Endothelial cell of umbilical vein (primary cell): ENCODE measurements at regions of chr21 and their contacts with region 1.

Region 1: DNA sequence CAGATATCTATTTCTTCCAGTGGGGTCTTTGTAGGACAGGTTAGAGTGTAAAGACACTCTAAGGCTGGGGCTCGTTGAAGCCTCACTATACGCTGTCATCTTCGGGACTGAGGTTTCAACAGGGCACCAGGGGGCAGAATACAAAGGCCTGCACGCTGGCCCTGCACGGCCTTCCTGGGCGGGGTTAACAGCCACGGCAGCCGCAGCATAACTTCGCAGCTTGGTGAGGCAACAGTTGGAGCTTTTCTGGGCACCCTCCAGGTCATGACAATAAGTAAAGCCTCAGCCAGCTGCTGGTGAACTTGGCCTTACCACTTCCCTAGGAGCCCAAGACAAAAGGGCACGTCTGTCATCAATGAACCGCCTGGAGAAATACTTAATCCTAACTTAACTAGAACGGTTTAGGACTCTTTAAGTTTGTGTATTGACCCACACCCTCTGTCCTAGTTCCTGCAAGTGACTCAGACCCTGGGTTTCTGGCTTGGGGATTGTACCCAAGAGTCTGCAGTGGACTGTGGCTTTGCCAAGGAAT is 2.3 kb upstream of the RUNX1 start:
- DNase-seq: peak; percentile 72
- H3K4me3 ChIP-seq: no peak overlapping the region
- H3K27ac ChIP-seq: no peak overlapping the region
- H3K4me1 ChIP-seq: peaks cover 43% of the 10 kb centered on the region
- H3K27me3 ChIP-seq: no peaks in the 10 kb centered on the region
- CTCF ChIP-seq: peak; percentile 71 to 74
- POLR2A ChIP-seq: no peak

Region 2: DNA sequence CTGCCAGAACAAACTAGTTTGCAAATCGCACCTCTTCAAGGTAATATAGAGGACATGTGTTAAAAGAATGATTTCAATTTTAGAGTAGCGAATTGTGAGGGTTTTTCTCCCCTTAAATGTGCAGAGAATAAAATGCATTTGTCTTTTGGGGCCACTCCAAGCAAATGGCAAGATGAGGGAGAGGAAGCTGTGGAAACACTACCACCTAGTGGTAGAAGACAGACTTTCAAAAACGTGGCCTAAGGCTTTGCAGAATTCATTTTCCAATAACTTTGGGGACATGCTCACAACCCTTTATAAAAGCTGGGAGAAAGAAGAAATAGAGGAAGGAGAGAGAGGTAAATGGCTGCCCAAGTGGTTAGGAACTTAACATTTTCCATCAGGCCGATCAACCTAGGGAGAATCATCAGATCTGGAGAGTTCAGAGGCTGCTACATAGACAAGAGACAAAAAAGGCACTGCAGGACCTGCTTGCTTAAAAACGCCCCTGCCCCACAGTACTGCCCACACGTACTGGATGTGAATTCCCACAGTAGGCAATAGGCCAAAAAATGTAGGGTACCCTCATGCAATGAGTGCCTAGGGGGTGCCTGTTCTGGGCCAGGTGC is 420.7 kb before region 1 on chr21:
- CTCF ChIA-PET with region 1: no interaction called
- POLR2A ChIA-PET with region 1: no interaction called
- dilution Hi-C with region 1: no loop called
- intact Hi-C with region 1: no loop called
- DNase-seq: peak; percentile 62
- H3K4me3 ChIP-seq: no peak overlapping the region
- H3K27ac ChIP-seq: no peak overlapping the region
- H3K4me1 ChIP-seq: no peaks in the 10 kb centered on the region
- H3K27me3 ChIP-seq: peaks cover 5 to 14% of the 10 kb centered on the region in 2 experiments
- CTCF ChIP-seq: peak; percentile 54 to 68
- POLR2A ChIP-seq: no peak

Region 3: GRCh38 chr21:34983680-34984086 is 67.7 kb before region 1 on chr21:
- CTCF ChIA-PET with region 1: interaction called, 6 read pairs
- POLR2A ChIA-PET with region 1: interaction called, 3 read pairs
- dilution Hi-C with region 1: no loop called
- intact Hi-C with region 1: loop called (anchors 2 kb)
- DNase-seq: peak; percentile 40
- H3K4me3 ChIP-seq: no peak overlapping the region
- H3K27ac ChIP-seq: peak overlapping the region; percentile 90
- H3K4me1 ChIP-seq: peaks cover 19% of the 10 kb centered on the region
- H3K27me3 ChIP-seq: peaks cover 2 to 10% of the 10 kb centered on the region in 2 experiments
- CTCF ChIP-seq: no peak
- POLR2A ChIP-seq: no peak

Region 4: DNA sequence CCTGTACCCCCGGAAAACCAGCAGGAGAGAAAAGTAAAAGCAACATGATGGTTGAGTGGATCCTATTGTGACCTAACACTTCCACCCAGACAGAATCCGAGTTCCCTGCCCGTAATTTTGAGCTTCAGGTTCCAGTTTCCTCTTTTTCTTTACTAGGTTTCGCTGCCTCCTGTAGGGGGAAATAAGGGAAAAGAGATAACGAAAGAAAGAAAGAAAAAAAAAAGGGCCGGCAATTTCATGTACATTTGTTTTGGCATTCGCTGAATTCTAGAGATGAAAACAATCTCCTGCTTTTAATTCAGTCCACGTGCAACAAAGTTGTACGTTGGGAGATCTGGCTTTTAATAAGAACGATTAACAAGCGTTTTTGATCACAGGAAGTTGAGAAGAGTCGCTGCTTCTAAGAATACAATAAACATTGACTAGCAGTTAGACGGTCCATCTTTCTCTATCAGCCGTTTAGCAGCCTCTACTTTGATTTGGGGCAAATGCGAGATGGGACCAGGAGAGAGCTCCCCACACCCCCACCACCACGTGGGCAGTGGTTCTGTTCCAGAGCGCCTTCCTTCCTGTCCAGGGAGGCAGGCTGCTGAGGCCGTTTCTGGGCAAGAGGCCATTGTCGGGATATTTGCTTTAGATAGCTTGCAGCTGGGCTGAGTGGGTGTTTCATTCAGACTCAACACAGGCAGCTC is 153.6 kb after region 1 on chr21:
- CTCF ChIA-PET with region 1: interaction called, 22 read pairs
- POLR2A ChIA-PET with region 1: no interaction called
- dilution Hi-C with region 1: no loop called
- intact Hi-C with region 1: loop called (anchors 1 kb)
- DNase-seq: peak; percentile 96
- H3K4me3 ChIP-seq: peak overlapping the region in 1 of 3 experiments; percentile 24
- H3K27ac ChIP-seq: peak overlapping the region; percentile 53
- H3K4me1 ChIP-seq: peaks cover 35% of the 10 kb centered on the region
- H3K27me3 ChIP-seq: no peaks in the 10 kb centered on the region
- CTCF ChIP-seq: no peak
- POLR2A ChIP-seq: peak; percentile 42

Region 5: DNA sequence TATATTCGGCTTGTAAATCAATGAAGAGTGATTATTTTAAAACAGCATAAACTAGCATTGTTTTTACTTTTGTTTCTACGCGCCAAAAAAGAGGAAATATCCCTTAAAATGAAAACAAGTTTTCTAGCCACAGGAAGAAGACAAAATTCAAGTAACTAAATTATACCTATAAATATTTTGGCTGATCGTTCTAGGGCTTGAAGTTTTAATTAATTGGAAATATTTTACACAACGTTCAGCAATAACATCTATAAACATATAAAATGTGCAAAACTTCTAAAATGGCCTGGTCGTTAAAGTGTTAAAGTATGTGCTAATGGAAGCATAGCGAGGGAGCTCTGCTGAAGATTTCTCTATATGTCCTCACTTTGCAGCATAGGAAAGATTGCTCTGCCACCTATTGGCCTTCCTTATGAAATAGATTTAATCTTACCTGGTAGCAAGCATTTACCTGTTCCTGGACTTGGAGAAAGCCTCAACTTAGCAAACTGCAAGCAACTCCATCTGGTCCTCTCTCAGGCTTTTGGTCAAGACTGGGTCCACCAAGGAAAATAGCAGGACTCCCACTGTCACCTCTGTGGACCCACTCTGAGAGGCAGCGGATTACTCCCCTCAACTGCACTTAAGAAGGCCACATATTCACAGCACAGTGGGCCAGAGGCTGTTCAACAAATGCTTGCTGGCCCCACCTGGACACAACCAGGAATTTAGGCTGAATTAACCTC is 349.0 kb after region 1 on chr21:
- CTCF ChIA-PET with region 1: interaction called, 47 read pairs
- POLR2A ChIA-PET with region 1: no interaction called
- dilution Hi-C with region 1: no loop called
- intact Hi-C with region 1: loop called (anchors 1 kb)
- DNase-seq: peak; percentile 73
- H3K4me3 ChIP-seq: no peak overlapping the region
- H3K27ac ChIP-seq: no peak overlapping the region
- H3K4me1 ChIP-seq: peaks cover 7% of the 10 kb centered on the region
- H3K27me3 ChIP-seq: peaks cover 0 to 2% of the 10 kb centered on the region in 2 experiments
- CTCF ChIP-seq: peak; percentile 24 to 29
- POLR2A ChIP-seq: no peak

Region 6: DNA sequence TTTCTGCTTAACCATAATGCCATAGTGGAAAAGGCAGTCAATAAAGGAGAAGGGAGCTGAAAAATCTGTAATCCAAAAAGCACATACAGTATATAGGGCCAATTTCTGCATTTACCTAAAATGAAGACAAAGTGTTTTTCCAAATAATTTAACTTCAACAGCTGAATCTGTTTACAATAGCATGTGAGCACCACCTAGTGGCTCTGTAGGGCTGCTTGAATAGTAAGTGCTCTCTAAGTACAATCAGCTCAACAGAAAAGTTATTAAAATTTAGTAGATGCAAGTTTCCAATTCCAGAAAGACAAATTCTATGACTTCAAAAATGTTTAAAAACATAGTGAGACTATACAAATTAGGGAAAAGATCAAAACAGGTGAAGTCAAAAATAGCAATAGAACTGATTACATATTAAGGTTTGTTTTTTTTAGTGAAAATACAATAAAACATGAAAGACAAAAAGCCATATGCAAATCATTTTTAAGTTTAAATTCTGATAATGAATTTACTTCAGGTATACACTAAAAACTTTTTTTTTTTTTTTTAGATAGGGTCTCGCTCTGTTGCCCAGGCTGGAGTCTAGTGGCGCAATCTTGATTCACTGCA is 788.9 kb after region 1 on chr21:
- CTCF ChIA-PET with region 1: interaction called, 21 read pairs
- POLR2A ChIA-PET with region 1: no interaction called
- dilution Hi-C with region 1: no loop called
- intact Hi-C with region 1: loop called (anchors 2 kb)
- DNase-seq: peak; percentile 78
- H3K4me3 ChIP-seq: no peak overlapping the region
- H3K27ac ChIP-seq: no peak overlapping the region
- H3K4me1 ChIP-seq: no peaks in the 10 kb centered on the region
- H3K27me3 ChIP-seq: peaks cover 0 to 2% of the 10 kb centered on the region in 2 experiments
- CTCF ChIP-seq: peak; percentile 65 to 71
- POLR2A ChIP-seq: no peak

Region 7: GRCh38 chr21:36028127-36029069 is 977.0 kb after region 1 on chr21:
- CTCF ChIA-PET with region 1: no interaction called
- POLR2A ChIA-PET with region 1: no interaction called
- dilution Hi-C with region 1: no loop called
- intact Hi-C with region 1: loop called (anchors 2 kb)
- DNase-seq: peak; percentile 73
- H3K4me3 ChIP-seq: no peak overlapping the region
- H3K27ac ChIP-seq: no peak overlapping the region
- H3K4me1 ChIP-seq: no peaks in the 10 kb centered on the region
- H3K27me3 ChIP-seq: peaks cover 0 to 2% of the 10 kb centered on the region in 2 experiments
- CTCF ChIP-seq: peak; percentile 90 to 92
- POLR2A ChIP-seq: no peak

Region 8: DNA sequence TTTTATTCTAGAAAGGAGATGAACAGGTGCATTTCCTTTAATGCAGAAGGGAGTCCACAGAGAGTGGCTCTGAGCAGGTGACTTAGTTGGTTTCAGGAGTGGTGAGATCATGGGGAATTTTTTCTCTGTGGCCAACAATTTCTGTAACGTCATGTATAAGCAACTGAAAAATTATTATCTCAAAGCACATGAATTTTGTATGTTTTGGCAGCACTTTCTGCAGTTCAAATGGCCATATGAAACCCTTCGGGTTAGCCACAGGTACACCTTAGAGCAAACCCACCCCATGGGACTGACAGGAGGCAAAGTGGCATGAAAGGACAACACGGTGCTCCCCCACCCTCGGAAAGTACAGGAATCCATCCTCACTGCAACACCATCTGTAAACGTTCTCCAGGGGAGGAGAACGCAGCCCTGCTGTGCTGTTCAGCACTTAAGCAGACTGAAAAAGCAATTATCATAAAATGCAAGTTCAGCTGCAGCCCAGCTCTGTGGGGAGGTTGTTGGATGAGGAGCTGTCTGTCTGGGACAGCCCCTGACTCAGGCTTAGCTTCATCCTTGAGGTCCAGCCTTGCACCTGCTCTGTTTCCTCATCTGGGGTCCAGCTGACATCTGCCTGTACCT is 1484.4 kb after region 1 on chr21:
- CTCF ChIA-PET with region 1: no interaction called
- POLR2A ChIA-PET with region 1: no interaction called
- dilution Hi-C with region 1: no loop called
- intact Hi-C with region 1: no loop called
- DNase-seq: no peak
- H3K4me3 ChIP-seq: no peak overlapping the region
- H3K27ac ChIP-seq: no peak overlapping the region
- H3K4me1 ChIP-seq: no peaks in the 10 kb centered on the region
- H3K27me3 ChIP-seq: peaks cover 2% of the 10 kb centered on the region in 2 experiments
- CTCF ChIP-seq: no peak
- POLR2A ChIP-seq: no peak

Region 9: DNA sequence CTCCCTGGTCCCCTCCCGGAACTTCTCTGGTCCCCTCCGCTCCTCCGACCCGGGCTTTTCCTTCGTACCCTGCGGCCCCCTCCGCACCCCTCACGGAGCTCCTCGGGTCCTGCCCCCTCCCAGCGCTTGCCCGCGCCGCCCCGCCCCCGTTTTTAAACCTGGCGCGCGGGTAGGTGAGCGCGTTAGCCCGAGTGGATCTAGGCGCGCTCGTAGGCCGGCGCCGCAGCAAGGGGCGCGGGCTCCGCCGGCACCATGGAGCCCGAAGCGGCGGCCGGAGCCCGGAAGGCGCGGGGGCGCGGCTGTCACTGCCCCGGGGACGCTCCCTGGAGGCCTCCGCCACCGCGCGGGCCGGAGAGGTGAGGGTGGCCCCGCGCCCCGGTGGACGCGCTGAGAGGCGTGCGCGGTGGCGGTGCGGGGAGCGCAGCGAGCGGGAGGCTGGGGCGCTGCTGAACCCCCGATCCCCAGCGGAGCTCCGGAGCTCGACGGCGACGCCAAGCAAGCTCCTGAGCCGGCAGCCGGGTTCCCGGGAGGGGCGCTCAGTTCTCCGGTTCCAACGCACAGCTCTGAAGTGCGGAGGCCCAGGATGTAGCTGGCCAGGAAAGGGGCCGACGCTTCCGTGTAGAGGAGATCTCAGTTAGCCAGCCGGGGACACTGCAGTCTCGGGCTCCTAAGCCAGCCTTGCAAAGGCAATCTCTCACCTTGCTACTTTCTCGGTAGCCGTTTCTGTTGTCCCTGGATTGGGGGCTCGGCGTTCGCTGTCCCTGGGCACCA is 1955.4 kb after region 1 on chr21 and contains the start of gene RIPPLY3:
- CTCF ChIA-PET with region 1: no interaction called
- POLR2A ChIA-PET with region 1: no interaction called
- dilution Hi-C with region 1: no loop called
- intact Hi-C with region 1: no loop called
- DNase-seq: no peak
- H3K4me3 ChIP-seq: peak within 1 kb of the TSS; percentile 14 to 26 (median 14)
- H3K27ac ChIP-seq: no peak within 1 kb of the TSS
- H3K4me1 ChIP-seq: peaks cover 8% of the 10 kb centered on the region
- H3K27me3 ChIP-seq: peaks cover 26 to 32% of the 10 kb centered on the region in 2 experiments
- CTCF ChIP-seq: no peak
- POLR2A ChIP-seq: no peak
- total RNA-seq, gene RIPPLY3: not detected in 2 replicates